Natural killer cell (primary cell): ENCODE measurements at regions of chr2 and their contacts with region 1.

Region 1: DNA sequence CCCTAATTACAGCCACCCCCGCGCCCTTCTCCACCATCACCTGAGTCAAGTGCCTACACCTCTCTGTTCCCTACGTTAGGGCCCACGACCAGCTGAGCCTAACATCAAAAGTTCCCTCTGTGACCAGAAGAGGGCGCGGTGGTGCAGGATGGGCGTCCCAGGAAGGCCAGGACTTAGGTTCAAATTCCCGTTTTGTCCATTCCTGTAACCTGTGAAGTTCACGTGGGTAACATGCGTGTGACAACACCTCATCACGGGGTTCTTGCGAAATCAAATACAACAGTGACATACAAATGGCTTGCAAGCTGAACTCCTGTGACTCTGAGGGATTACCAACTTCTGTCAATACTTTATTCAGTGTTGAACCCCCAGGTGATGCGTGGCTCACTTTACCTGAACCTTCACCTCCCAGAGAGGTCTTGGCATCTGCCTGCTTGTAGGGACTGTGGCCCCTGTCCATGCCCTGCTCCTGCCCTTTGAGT is 207.9 kb downstream of the ARL4C start:
- DNase-seq: peak; percentile 75 to 90
- ATAC-seq: peak; percentile 1 to 16 (median 12)
- H3K4me3 ChIP-seq: no peak overlapping the region
- H3K4me3 Mint-ChIP-seq: peak overlapping the region; percentile 85
- H3K27ac ChIP-seq: peak overlapping the region; percentile 99
- H3K27ac Mint-ChIP-seq: peak overlapping the region; percentile 97 to 98
- H3K4me1 ChIP-seq: peaks cover 63% of the 10 kb centered on the region
- H3K4me1 Mint-ChIP-seq: peaks cover 63 to 81% of the 10 kb centered on the region in 2 donors
- H3K27me3 ChIP-seq: no peaks in the 10 kb centered on the region
- H3K27me3 Mint-ChIP-seq: no peaks in the 10 kb centered on the region
- CTCF ChIP-seq: peak; percentile 88

Region 2: DNA sequence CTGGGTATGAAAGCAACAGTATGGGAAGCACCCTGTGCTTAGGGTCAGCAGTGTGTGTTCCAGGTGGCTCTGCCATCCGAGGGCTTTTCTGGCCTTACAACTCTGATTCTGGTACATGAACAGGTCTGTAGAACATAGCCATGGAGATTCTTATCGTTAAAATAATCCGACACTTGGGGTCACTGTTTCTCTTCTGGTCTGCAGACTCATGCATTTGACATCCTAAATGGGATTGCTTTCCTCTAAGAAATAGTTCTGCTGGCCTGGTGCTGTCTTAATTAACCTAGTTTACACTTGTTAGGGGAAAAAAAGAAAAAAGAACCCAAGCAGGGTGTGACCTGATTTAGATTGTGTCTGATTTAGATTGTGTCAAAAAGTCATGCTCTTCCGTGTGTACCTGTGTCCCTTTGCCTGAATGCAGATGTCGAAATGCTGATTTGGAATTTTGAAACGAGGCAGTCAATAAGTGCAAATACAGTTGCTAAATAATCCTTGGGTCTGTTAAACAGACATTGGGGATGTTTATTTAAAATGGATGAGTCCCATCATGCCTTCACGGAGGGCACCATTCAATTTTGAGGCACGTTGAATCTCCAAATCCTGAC is 312.2 kb before region 1 on chr2:
- intact Hi-C with region 1: loop called (anchors 5 kb)
- DNase-seq: peak in 1 of 2 donors; percentile 82
- ATAC-seq: peak; percentile 73 to 88 (median 84)
- H3K4me3 ChIP-seq: no peak overlapping the region
- H3K4me3 Mint-ChIP-seq: no peak overlapping the region
- H3K27ac ChIP-seq: no peak overlapping the region
- H3K27ac Mint-ChIP-seq: peak overlapping the region; percentile 36 to 67
- H3K4me1 ChIP-seq: peaks cover 21% of the 10 kb centered on the region
- H3K4me1 Mint-ChIP-seq: peaks cover 26 to 31% of the 10 kb centered on the region in 2 donors
- H3K27me3 ChIP-seq: no peaks in the 10 kb centered on the region
- H3K27me3 Mint-ChIP-seq: peaks cover 0 to 9% of the 10 kb centered on the region in 2 donors
- CTCF ChIP-seq: peak; percentile 73

Region 3: DNA sequence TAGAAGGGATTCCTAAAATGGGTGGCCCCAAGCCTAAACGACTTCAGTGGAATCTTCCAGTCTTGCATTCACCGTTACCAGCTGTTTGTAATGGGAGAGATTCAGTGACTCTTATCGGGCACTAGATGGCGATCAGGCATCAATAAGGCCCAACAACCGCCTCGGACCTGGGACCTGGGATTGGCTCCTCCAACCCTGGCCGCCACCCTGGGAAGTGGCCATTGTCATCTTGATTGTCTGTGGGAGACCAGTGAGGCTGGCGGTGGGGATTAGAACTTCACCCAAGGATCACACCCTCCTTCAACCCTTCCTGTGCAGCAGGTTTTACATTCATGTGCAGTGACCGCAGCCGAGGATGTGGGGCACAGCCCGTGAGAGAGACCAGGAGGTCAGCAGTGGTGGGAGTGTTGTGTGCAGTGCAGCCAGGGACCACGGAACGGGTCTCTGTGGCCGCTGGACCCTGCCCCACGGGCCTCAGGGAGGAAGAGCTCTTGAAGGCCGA is 153.2 kb before region 1 on chr2:
- intact Hi-C with region 1: loop called (anchors 5 kb)
- DNase-seq: peak; percentile 41 to 79
- ATAC-seq: peak; percentile 50 to 74 (median 73)
- H3K4me3 ChIP-seq: no peak overlapping the region
- H3K4me3 Mint-ChIP-seq: peak overlapping the region; percentile 83
- H3K27ac ChIP-seq: peak overlapping the region; percentile 57
- H3K27ac Mint-ChIP-seq: peak overlapping the region; percentile 72 to 88
- H3K4me1 ChIP-seq: peaks cover 50% of the 10 kb centered on the region
- H3K4me1 Mint-ChIP-seq: peaks cover 41 to 43% of the 10 kb centered on the region in 2 donors
- H3K27me3 ChIP-seq: no peaks in the 10 kb centered on the region
- H3K27me3 Mint-ChIP-seq: no peaks in the 10 kb centered on the region
- CTCF ChIP-seq: peak; percentile 76

Region 4: DNA sequence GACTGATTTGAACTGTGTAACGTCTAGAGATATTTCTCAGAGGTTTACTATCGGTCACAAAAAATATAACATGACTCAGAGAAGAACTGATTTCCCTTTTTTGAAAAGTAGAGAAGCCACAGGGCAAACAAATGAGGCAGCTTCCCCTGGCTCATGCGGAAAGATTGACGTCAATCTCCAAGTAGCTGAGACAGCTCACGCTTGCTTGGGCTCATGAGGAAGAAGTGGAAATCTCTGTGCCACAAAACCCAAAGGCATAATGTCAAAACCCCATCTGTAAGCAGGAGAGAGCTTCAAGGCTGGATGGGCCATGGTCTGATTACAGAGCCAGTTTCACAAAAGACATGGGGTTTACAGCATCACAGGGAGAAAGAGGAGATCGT is 19.8 kb after region 1 on chr2:
- intact Hi-C with region 1: loop called (anchors 1 kb)
- DNase-seq: peak; percentile 30 to 88
- ATAC-seq: peak; percentile 82 to 87 (median 85)
- H3K4me3 ChIP-seq: no peak overlapping the region
- H3K4me3 Mint-ChIP-seq: no peak overlapping the region
- H3K27ac ChIP-seq: peak overlapping the region; percentile 54
- H3K27ac Mint-ChIP-seq: peak overlapping the region; percentile 70 to 93
- H3K4me1 ChIP-seq: peaks cover 25% of the 10 kb centered on the region
- H3K4me1 Mint-ChIP-seq: peaks cover 23 to 49% of the 10 kb centered on the region in 2 donors
- H3K27me3 ChIP-seq: no peaks in the 10 kb centered on the region
- H3K27me3 Mint-ChIP-seq: no peaks in the 10 kb centered on the region
- CTCF ChIP-seq: no peak

Region 5: GRCh38 chr2:234446404-234447076 is 157.5 kb after region 1 on chr2:
- intact Hi-C with region 1: loop called (anchors 1 kb)
- DNase-seq: peak; percentile 76 to 94
- ATAC-seq: peak; percentile 89 to 95 (median 92)
- H3K4me3 ChIP-seq: no peak overlapping the region
- H3K4me3 Mint-ChIP-seq: peak overlapping the region; percentile 82
- H3K27ac ChIP-seq: peak overlapping the region; percentile 97
- H3K27ac Mint-ChIP-seq: peak overlapping the region; percentile 98 to 99
- H3K4me1 ChIP-seq: peaks cover 52% of the 10 kb centered on the region
- H3K4me1 Mint-ChIP-seq: peaks cover 69 to 71% of the 10 kb centered on the region in 2 donors
- H3K27me3 ChIP-seq: no peaks in the 10 kb centered on the region
- H3K27me3 Mint-ChIP-seq: no peaks in the 10 kb centered on the region
- CTCF ChIP-seq: no peak

Region 6: GRCh38 chr2:234494361-234495250 is 205.6 kb after region 1 on chr2:
- intact Hi-C with region 1: loop called (anchors 1 kb)
- DNase-seq: peak in 1 of 2 donors; percentile 77
- ATAC-seq: no peak
- H3K4me3 ChIP-seq: peak overlapping the region; percentile 86
- H3K4me3 Mint-ChIP-seq: peak overlapping the region; percentile 100
- H3K27ac ChIP-seq: peak overlapping the region; percentile 94
- H3K27ac Mint-ChIP-seq: peak overlapping the region; percentile 95 to 99
- H3K4me1 ChIP-seq: peaks cover 48% of the 10 kb centered on the region
- H3K4me1 Mint-ChIP-seq: peaks cover 64 to 73% of the 10 kb centered on the region in 2 donors
- H3K27me3 ChIP-seq: no peaks in the 10 kb centered on the region
- H3K27me3 Mint-ChIP-seq: no peaks in the 10 kb centered on the region
- CTCF ChIP-seq: no peak